IMR-90 (cell line): ENCODE measurements at regions of chr17 and their contacts with region 1.

Region 1: GRCh38 chr17:42027961-42028790 is 8.3 kb downstream of the NKIRAS2 start:
- DNase-seq: no peak
- ATAC-seq: no peak
- H3K4me3 ChIP-seq: no peak overlapping the region
- H3K27ac ChIP-seq: no peak overlapping the region
- H3K4me1 ChIP-seq: peaks cover 7% of the 10 kb centered on the region
- H3K27me3 ChIP-seq: peaks cover 16% of the 10 kb centered on the region
- CTCF ChIP-seq: 0 out of 2 replicates have a peak, but pooled peaks have one; percentile 4
- POLR2A ChIP-seq: no peak
- RAD21 ChIP-seq: no peak

Region 2: DNA sequence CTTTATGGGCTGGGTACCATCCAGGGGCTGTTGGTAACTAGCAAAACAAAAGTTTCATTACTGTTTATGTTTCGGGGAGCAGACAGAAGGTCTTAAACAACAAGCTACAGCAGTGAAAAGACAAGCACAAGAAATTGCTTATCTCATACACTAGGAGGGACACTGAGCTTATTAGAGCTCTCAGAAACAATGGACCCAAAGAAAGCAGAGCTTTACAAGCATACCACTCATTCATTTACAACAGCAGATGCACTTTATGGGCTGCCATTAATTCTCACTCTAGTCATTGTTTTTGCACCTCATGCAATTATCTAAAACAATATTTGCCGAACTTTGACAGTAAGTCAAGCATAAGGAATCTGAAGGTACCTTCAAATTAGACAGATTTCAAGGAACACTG is 425.7 kb before region 1 on chr17:
- CTCF ChIA-PET with region 1: no interaction called
- POLR2A ChIA-PET with region 1: no interaction called
- dilution Hi-C with region 1: no loop called
- in situ Hi-C with region 1: no loop called
- intact Hi-C with region 1: no loop called
- DNase-seq: no peak
- ATAC-seq: no peak
- H3K4me3 ChIP-seq: no peak overlapping the region
- H3K27ac ChIP-seq: no peak overlapping the region
- H3K4me1 ChIP-seq: no peaks in the 10 kb centered on the region
- H3K27me3 ChIP-seq: peaks cover 34% of the 10 kb centered on the region
- CTCF ChIP-seq: no peak
- POLR2A ChIP-seq: no peak
- RAD21 ChIP-seq: no peak

Region 3: GRCh38 chr17:42041619-42042018 is 13.4 kb after region 1 on chr17:
- CTCF ChIA-PET with region 1: interaction called, 3 read pairs
- POLR2A ChIA-PET with region 1: interaction called, 11 read pairs
- dilution Hi-C with region 1: no loop called
- in situ Hi-C with region 1: no loop called
- intact Hi-C with region 1: no loop called
- DNase-seq: no peak
- ATAC-seq: no peak
- H3K4me3 ChIP-seq: no peak overlapping the region
- H3K27ac ChIP-seq: no peak overlapping the region
- H3K4me1 ChIP-seq: no peaks in the 10 kb centered on the region
- H3K27me3 ChIP-seq: peaks cover 33% of the 10 kb centered on the region
- CTCF ChIP-seq: no peak
- POLR2A ChIP-seq: no peak
- RAD21 ChIP-seq: no peak

Region 4: GRCh38 chr17:42112552-42113176 is 84.5 kb after region 1 on chr17 and contains the start of gene DHX58:
- CTCF ChIA-PET with region 1: interaction called, 3 read pairs
- POLR2A ChIA-PET with region 1: no interaction called
- dilution Hi-C with region 1: no loop called
- in situ Hi-C with region 1: loop called (anchors 5 kb)
- intact Hi-C with region 1: loop called (anchors 1 kb)
- DNase-seq: peak; percentile 80
- ATAC-seq: peak; percentile 83
- H3K4me3 ChIP-seq: peak within 1 kb of the TSS; percentile 37
- H3K27ac ChIP-seq: peak within 1 kb of the TSS; percentile 53
- H3K4me1 ChIP-seq: peaks cover 4% of the 10 kb centered on the region; the same call in 1 of the 2 replicates
- H3K27me3 ChIP-seq: no peaks in the 10 kb centered on the region
- CTCF ChIP-seq: no peak
- POLR2A ChIP-seq: no peak
- RAD21 ChIP-seq: no peak
- total RNA-seq, gene DHX58: 1.1 and 1.4 TPM in 2 replicates

Region 5: GRCh38 chr17:42405963-42406495 is 377.9 kb after region 1 on chr17:
- CTCF ChIA-PET with region 1: no interaction called
- POLR2A ChIA-PET with region 1: no interaction called
- dilution Hi-C with region 1: no loop called
- in situ Hi-C with region 1: no loop called
- intact Hi-C with region 1: loop called (anchors 5 kb)
- DNase-seq: peak; percentile 59
- ATAC-seq: peak; percentile 38
- H3K4me3 ChIP-seq: no peak overlapping the region
- H3K27ac ChIP-seq: 0 out of 2 replicates have a peak overlapping the region, but pooled peaks have one; percentile 1
- H3K4me1 ChIP-seq: peaks cover 41% of the 10 kb centered on the region
- H3K27me3 ChIP-seq: no peaks in the 10 kb centered on the region
- CTCF ChIP-seq: peak; percentile 87
- POLR2A ChIP-seq: no peak
- RAD21 ChIP-seq: peak; percentile 87